Mammary epithelial cell (primary cell): ENCODE measurements at regions of chr14 and their contacts with region 1.

Region 1: DNA sequence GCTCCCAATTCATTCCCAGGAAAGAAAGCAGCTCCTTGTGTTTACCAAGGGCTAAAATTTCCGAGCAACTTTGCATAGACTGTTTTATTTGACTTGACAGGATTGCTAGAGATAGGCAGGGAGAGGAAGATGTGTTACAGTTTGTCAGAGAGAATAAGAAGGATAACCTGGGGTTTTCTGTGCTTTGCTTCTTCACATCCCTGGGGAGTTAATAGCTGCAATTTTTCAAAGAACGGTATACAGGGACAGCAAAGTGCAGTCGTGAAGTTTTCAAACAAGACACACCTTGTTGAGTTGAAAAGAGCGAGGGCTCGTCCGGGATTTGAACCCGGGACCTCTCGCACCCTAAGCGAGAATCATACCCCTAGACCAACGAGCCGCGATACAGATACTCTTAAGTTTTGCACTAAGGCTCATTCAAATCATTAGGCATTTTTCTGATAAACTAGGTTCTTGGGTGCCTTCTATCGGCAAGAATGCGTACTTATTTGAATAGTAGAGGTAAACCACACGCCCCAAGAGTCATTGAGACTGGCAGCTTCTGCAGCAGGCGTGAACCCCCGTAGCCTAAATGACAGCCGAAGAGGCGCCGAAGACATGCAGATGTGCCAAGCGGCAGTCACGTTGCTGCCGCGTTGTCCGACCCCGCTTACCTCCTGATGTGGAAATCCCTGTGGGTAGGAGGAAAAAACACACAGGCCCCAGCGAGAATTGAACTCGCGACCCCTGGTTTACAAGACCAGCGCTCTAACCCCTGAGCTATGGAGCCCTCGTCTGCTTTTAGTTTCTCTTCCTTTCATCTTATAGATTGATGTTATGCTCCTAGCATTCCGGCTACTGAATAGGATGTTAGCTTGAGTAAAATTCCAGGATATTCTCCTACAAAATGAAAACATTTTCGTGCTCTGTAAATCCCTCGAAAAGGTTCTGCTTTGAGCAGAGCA is 22.2 kb upstream of the RNASE12 start:
- DNase-seq: peak; percentile 97
- H3K4me3 ChIP-seq: peak overlapping the region; percentile 50 to 69 (median 67)
- H3K27ac ChIP-seq: peak overlapping the region; percentile 73
- H3K4me1 ChIP-seq: peaks cover 14% of the 10 kb centered on the region
- H3K27me3 ChIP-seq: no peaks in the 10 kb centered on the region
- CTCF ChIP-seq: peak; percentile 75 to 81

Region 2: DNA sequence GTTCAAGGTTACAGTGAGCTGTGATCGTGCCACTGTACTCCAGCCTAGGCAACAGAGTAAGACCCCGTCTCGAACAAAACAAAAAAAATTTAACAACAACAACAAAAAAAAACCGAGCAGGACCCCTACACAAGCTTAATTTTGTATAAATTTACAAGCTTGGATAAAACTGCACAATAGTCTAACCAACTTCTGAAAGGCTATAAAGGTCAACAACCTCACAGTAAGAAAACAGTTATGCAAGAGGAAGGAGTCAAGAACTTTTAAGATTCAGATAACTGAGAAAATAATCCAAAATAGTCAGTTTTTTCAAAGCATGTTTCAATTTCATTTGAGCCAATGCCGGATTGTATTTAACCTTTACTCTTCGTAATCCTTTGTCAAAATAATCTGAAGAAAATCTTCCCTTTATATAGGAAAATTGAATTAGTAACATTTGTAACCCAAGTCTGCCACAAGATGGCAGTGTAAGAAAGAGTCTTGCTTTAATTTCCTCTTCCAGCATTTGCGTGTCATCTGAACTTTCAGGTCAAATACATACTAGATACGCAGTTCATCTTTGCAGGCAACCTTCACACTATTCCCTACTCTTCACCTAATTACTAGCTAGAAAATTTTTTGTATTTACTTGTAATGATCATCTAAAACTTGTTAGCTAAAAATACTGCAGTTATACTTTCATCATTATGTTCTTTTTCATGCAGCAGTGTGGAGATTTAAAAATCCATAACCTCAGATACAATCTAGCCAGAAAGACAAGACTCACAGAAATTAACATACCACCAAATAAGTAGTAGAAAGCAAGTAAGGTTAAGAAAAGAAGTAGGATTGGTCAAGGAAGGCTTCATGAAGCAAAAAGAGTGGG is 286.1 kb before region 1 on chr14:
- CTCF ChIA-PET with region 1: no interaction called
- dilution Hi-C with region 1: no loop called
- in situ Hi-C with region 1: loop called (anchors 5 to 10 kb)
- intact Hi-C with region 1: loop called (anchors 1 kb)
- DNase-seq: peak; percentile 50
- H3K4me3 ChIP-seq: no peak overlapping the region
- H3K27ac ChIP-seq: no peak overlapping the region
- H3K4me1 ChIP-seq: peaks cover 12% of the 10 kb centered on the region
- H3K27me3 ChIP-seq: no peaks in the 10 kb centered on the region
- CTCF ChIP-seq: peak; percentile 51 to 60

Region 3: GRCh38 chr14:20413045-20413799 is 200.1 kb before region 1 on chr14 and contains the start of gene TEP1:
- CTCF ChIA-PET with region 1: no interaction called
- dilution Hi-C with region 1: no loop called
- in situ Hi-C with region 1: no loop called
- intact Hi-C with region 1: loop called (anchors 1 kb)
- DNase-seq: peak; percentile 87
- H3K4me3 ChIP-seq: peak within 1 kb of the TSS; percentile 92 to 98 (median 97)
- H3K27ac ChIP-seq: peak within 1 kb of the TSS; percentile 81
- H3K4me1 ChIP-seq: peaks cover 11% of the 10 kb centered on the region
- H3K27me3 ChIP-seq: no peaks in the 10 kb centered on the region
- CTCF ChIP-seq: no peak
- total RNA-seq, gene TEP1: 27.5 to 28.1 TPM

Region 4: GRCh38 chr14:20489093-20489994 is 124.0 kb before region 1 on chr14:
- CTCF ChIA-PET with region 1: no interaction called
- dilution Hi-C with region 1: no loop called
- in situ Hi-C with region 1: no loop called
- intact Hi-C with region 1: no loop called
- DNase-seq: peak; percentile 73
- H3K4me3 ChIP-seq: no peak overlapping the region
- H3K27ac ChIP-seq: no peak overlapping the region
- H3K4me1 ChIP-seq: peaks cover 22% of the 10 kb centered on the region
- H3K27me3 ChIP-seq: no peaks in the 10 kb centered on the region
- CTCF ChIP-seq: no peak

Region 5: DNA sequence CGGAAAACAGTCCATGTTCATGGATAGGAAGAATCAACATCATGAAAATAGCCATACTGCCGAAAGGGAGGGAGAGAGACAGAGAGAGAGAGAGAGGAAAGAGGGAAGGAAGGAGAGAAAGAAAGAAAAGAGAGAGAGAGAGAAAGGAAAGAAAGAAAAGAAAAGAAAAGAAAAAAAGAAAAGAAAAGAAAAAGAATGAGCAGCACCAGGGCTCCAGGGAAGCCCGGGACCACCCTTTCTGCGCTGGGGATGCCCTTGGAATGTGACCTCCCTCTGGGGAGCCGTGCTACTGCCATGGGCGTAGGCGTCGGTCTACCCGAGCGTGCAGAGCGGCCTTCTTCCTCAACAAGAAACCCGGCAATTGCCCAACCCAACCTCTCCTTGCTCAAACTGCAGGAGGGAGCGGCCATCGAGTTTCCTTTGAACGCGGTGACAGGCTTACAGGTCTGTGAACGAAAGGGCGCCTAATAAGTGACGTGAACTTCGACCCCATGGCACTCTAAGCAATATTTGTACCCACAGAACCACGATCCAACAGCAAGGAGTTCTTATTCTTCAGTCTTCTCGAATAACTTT is 11.2 kb after region 1 on chr14:
- CTCF ChIA-PET with region 1: interaction called, 3 read pairs
- dilution Hi-C with region 1: no loop called
- in situ Hi-C with region 1: no loop called
- intact Hi-C with region 1: loop called (anchors 1 kb)
- DNase-seq: peak; percentile 60
- H3K4me3 ChIP-seq: peak overlapping the region; percentile 31 to 60 (median 57)
- H3K27ac ChIP-seq: peak overlapping the region; percentile 35
- H3K4me1 ChIP-seq: peaks cover 11% of the 10 kb centered on the region
- H3K27me3 ChIP-seq: no peaks in the 10 kb centered on the region
- CTCF ChIP-seq: no peak

Region 6: DNA sequence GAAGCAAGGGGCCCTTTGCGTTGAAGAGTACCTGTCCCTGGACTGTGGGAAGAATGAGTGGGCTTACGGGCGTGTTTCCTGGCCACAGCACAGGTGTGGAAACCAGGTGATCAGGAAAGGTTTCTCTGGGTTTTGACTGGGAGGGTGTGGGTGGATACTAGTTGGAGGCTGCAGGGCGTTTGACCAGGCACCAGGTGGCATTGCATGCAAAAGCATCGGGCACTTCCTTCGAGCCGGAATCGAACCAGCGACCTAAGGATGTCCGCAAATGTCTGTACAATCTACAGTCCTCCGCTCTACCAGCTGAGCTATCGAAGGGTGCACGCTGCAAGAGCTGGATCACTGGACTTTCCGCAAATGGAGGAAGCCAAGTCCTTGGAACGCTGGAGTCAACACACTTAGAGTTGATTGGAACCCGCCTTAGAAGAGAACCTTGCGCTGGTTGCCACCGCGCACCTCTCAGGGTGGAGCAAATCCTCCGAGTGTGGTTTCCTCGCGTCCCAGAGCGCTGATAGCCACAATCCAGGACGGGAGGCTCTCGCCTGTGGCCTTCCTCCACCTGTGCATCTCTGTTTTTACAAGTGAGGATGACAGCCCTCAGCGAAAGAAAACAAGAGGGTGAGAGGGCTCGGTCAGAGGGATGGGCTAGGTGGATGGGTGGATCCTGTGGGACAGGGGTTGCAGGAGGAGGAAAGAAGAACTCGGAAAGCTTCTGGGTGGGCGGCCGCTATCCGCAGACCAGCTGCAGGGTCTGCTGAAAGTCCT is 49.8 kb after region 1 on chr14:
- CTCF ChIA-PET with region 1: no interaction called
- dilution Hi-C with region 1: no loop called
- in situ Hi-C with region 1: no loop called
- intact Hi-C with region 1: loop called (anchors 1 kb)
- DNase-seq: peak; percentile 89
- H3K4me3 ChIP-seq: peak overlapping the region; percentile 20 to 44 (median 43)
- H3K27ac ChIP-seq: no peak overlapping the region
- H3K4me1 ChIP-seq: no peaks in the 10 kb centered on the region
- H3K27me3 ChIP-seq: no peaks in the 10 kb centered on the region
- CTCF ChIP-seq: peak; percentile 41 to 78

Region 7: GRCh38 chr14:20855652-20856291 is 242.4 kb after region 1 on chr14:
- CTCF ChIA-PET with region 1: no interaction called
- dilution Hi-C with region 1: no loop called
- in situ Hi-C with region 1: no loop called
- intact Hi-C with region 1: loop called (anchors 1 kb)
- DNase-seq: peak; percentile 62
- H3K4me3 ChIP-seq: no peak overlapping the region
- H3K27ac ChIP-seq: no peak overlapping the region
- H3K4me1 ChIP-seq: peaks cover 4% of the 10 kb centered on the region
- H3K27me3 ChIP-seq: peaks cover 2% of the 10 kb centered on the region
- CTCF ChIP-seq: peak; percentile 59 to 76

Region 8: DNA sequence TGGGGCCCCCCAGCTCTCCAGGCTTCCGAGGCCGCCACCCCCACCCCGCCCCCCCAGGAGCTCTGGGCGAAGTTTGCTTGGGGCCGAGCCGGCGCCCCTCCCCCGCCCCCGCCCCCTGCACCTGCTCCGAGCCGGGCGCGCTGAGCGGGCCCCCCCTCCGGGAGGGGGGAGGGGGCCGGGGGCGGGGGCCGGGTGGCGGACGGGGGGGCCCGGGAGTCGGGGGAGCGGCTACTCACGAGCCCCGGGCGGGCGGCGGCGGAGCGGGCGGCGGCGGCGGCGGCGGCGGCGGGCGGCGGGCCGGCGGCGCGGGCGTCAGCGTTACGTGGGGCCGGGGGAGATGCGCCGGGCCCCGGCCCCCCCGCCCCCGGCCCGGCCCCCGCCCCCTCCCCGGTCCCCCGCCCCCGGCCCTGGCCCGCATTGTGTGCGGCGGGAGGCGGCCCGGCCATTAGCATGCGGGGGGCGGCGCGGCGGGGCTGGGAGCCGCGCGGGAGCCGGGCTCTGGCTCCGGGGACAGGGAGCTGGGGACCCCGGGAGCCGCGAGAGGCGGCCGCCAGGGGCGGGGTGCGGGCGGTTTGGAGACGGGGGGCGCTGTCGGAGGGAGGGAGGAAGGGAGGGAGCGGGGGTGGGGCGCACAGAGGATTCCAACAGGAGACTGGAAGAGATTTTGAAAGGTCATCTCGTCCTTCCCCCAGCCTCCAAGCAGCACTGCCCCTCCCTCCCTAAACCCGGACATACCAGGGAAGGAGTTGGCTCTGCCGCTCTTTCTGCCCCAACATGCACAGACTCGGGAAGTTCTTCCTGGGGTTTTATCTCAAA is 484.9 kb after region 1 on chr14 and contains the start of gene ZNF219:
- CTCF ChIA-PET with region 1: no interaction called
- dilution Hi-C with region 1: no loop called
- in situ Hi-C with region 1: no loop called
- intact Hi-C with region 1: loop called (anchors 5 kb)
- DNase-seq: peak; percentile 74
- H3K4me3 ChIP-seq: peak within 1 kb of the TSS; percentile 62 to 79 (median 62)
- H3K27ac ChIP-seq: peak within 1 kb of the TSS; percentile 69
- H3K4me1 ChIP-seq: peaks cover 48% of the 10 kb centered on the region
- H3K27me3 ChIP-seq: no peaks in the 10 kb centered on the region
- CTCF ChIP-seq: no peak
- total RNA-seq, gene ZNF219: 25.0 to 62.1 TPM

Region 9: GRCh38 chr14:21575661-21576060 is 962.3 kb after region 1 on chr14:
- CTCF ChIA-PET with region 1: no interaction called
- dilution Hi-C with region 1: no loop called
- in situ Hi-C with region 1: no loop called
- intact Hi-C with region 1: no loop called
- DNase-seq: no peak
- H3K4me3 ChIP-seq: no peak overlapping the region
- H3K27ac ChIP-seq: no peak overlapping the region
- H3K4me1 ChIP-seq: no peaks in the 10 kb centered on the region
- H3K27me3 ChIP-seq: peaks cover 2% of the 10 kb centered on the region
- CTCF ChIP-seq: no peak